HEK293 (cell line): ENCODE measurements at regions of chr12 and their contacts with region 1.

Region 1: GRCh38 chr12:45543906-45544315 is 185.6 kb upstream of the ARID2 start:
- H3K4me3 ChIP-seq: no peak overlapping the region
- H3K27ac ChIP-seq: no peak overlapping the region
- H3K4me1 ChIP-seq: no peaks in the 10 kb centered on the region
- CTCF ChIP-seq: peak; percentile 52; the same call in 1 of the 2 replicates

Region 2: DNA sequence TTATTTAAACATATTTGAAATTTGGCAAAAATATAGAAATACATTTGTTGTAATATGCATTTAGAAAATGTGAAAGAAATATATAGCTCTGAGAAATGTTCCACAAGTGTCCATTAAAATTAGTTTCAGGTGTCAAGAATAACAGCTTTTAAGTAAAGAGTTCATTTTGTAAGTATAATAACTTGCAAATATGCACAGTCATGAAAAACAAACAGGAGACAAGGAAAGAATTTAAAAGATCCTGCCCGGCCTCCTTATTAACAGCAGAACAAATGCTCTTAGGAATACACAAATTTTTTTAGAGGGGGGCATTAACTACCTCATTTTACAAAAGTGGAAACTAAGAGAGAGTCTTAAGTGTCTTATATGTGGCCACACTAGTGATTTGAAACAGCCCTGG is 415.3 kb before region 1 on chr12:
- CTCF ChIA-PET with region 1: no interaction called
- POLR2A ChIA-PET with region 1: no interaction called
- H3K4me3 ChIP-seq: no peak overlapping the region
- H3K27ac ChIP-seq: no peak overlapping the region
- H3K4me1 ChIP-seq: no peaks in the 10 kb centered on the region
- CTCF ChIP-seq: no peak

Region 3: GRCh38 chr12:45598761-45599160 is 54.9 kb after region 1 on chr12:
- CTCF ChIA-PET with region 1: no interaction called
- POLR2A ChIA-PET with region 1: no interaction called
- H3K4me3 ChIP-seq: no peak overlapping the region
- H3K27ac ChIP-seq: no peak overlapping the region
- H3K4me1 ChIP-seq: no peaks in the 10 kb centered on the region
- CTCF ChIP-seq: no peak

Region 4: GRCh38 chr12:45655201-45655600 is 111.3 kb after region 1 on chr12:
- CTCF ChIA-PET with region 1: interaction called, 13 read pairs
- POLR2A ChIA-PET with region 1: no interaction called
- H3K4me3 ChIP-seq: no peak overlapping the region
- H3K27ac ChIP-seq: no peak overlapping the region
- H3K4me1 ChIP-seq: no peaks in the 10 kb centered on the region
- CTCF ChIP-seq: no peak

Region 5: DNA sequence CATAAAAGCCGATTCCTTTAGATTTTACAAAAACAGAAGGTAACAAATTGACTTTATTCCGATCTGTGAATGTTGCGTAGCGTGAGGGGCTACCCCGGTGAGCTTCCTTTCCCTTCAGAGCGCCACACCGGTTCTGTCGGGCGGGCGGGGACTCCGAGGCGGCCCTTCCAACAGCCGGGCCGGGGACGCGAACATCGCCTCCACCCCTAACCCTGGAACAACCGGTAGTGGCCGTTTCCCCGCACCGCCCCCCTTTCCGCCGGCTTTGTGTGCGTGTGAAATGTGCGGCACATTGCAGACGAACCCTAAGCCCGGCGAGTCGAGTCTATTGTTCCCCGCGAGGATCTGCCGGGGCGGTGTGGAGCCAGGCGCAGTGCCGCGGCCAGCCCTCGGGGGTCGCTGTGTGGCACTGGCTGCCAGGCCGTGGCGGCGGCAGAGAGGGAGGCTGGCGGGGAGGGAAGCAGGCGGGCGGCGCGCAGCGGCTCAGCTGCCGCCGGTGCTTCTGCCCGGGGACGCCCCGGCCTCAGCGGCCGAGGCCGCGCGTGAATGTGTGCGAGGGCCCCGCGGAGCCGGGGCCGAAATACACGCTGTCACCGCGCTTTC is 184.8 kb after region 1 on chr12:
- CTCF ChIA-PET with region 1: interaction called, 47 read pairs
- POLR2A ChIA-PET with region 1: interaction called, 20 read pairs
- H3K4me3 ChIP-seq: peak overlapping the region; percentile 82
- H3K27ac ChIP-seq: peak overlapping the region; percentile 98
- H3K4me1 ChIP-seq: peaks cover 4% of the 10 kb centered on the region; the same call in 1 of the 2 replicates
- CTCF ChIP-seq: peak; percentile 98

Region 6: DNA sequence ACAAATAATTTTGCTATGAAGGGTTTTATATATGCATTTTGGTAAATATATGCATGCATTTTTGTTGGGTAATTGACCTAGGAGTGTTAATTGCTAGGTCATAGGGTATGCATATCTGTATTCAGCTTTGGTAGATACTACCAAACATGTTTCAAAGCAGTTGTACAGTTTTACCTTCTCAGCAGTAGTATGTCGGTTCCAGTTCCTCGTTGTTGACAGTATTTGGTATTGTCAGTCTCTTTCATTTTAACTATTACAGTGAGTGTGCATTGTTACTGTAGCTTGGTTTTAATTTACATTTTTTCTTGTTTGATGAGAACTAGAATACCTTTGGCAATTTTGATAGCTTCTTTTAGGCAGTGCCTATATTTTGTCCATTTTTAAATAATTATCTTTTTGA is 284.5 kb after region 1 on chr12:
- CTCF ChIA-PET with region 1: no interaction called
- POLR2A ChIA-PET with region 1: no interaction called
- H3K4me3 ChIP-seq: no peak overlapping the region
- H3K27ac ChIP-seq: no peak overlapping the region
- H3K4me1 ChIP-seq: no peaks in the 10 kb centered on the region
- CTCF ChIP-seq: no peak